G401 (cell line): ENCODE measurements at regions of chr15 and their contacts with region 1.

Region 1: GRCh38 chr15:101242160-101242998 is 9.5 kb downstream of the CHSY1 start:
- DNase-seq: no peak

Region 2: DNA sequence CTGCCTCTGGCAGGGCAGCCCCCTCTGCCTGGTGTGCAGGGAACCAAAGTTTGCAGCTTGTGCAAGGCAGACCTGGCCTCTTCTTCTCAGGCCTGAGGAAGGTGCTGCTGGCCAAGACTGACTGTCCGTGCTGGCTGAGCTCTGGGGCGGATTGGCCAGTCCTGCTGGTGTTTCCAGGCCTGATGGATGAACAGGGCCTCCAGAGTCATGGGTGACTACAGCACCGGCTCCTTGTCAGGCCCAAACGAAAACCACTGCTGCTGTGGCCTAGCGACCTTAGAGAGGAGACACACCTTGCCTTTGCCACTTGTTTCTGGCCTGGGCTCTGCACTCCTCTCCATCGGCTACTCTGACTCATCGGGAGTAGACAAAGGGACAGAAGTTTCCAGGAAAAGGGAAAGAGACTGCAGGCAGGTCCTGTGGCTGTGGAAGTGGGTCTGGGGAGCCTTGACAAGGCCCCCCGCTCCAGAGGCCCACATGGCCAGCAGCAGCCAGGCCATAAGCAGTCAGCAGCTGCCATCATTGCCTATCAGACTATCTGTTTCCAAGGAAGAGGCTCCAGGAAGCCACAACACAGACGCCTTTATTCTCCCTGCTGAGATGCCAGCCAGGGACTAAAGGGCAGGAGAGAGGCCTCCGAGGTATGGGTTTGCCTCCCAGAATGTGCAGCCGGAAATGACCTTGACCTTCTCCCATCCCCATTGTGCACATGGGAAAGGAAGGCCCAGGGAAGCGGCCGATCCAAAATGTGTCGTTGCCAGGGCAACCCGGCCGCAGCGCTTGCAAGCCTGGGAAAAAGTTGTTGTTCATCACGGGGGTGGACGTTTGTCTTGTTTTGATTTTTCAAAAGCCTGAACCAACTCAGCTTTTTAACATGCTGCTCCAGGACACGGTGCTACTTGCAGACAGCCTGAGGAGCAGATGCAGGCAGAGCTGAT is 151.0 kb before region 1 on chr15:
- in situ Hi-C with region 1: loop called (anchors 5 kb)
- DNase-seq: peak; percentile 46

Region 3: GRCh38 chr15:101206176-101206591 is 36.2 kb before region 1 on chr15:
- in situ Hi-C with region 1: loop called (anchors 5 kb)
- DNase-seq: no peak